ENCODE measurements at regions of chr14 and their contacts with region 1.

Region 1: GRCh38 chr14:68649476-68650189 is 143.2 kb downstream of the ZFP36L1 start:
- DNase-seq: peak in 1 of 3 donors; percentile 13
- H3K4me3 ChIP-seq: no peak overlapping the region
- H3K4me3 Mint-ChIP-seq: no peak overlapping the region
- H3K27ac ChIP-seq: no peak overlapping the region
- H3K27ac Mint-ChIP-seq: no peak overlapping the region
- H3K4me1 ChIP-seq: peaks cover 23 to 24% of the 10 kb centered on the region in 2 donors
- H3K4me1 Mint-ChIP-seq: peaks cover 30% of the 10 kb centered on the region
- H3K27me3 ChIP-seq: no peaks in the 10 kb centered on the region
- H3K27me3 Mint-ChIP-seq: peaks cover under 1 to 2% (median 2%) of the 10 kb centered on the region in 3 donors
- CTCF ChIP-seq: no peak

Region 2: GRCh38 chr14:68328509-68328908 is 321.1 kb before region 1 on chr14:
- intact Hi-C with region 1: no loop called
- DNase-seq: no peak
- H3K4me3 ChIP-seq: no peak overlapping the region
- H3K4me3 Mint-ChIP-seq: no peak overlapping the region
- H3K27ac ChIP-seq: no peak overlapping the region
- H3K27ac Mint-ChIP-seq: no peak overlapping the region
- H3K4me1 ChIP-seq: peaks cover 30 to 33% of the 10 kb centered on the region in 2 donors
- H3K4me1 Mint-ChIP-seq: peaks cover 36% of the 10 kb centered on the region
- H3K27me3 ChIP-seq: no peaks in the 10 kb centered on the region
- H3K27me3 Mint-ChIP-seq: no peaks in the 10 kb centered on the region
- CTCF ChIP-seq: no peak

Region 3: DNA sequence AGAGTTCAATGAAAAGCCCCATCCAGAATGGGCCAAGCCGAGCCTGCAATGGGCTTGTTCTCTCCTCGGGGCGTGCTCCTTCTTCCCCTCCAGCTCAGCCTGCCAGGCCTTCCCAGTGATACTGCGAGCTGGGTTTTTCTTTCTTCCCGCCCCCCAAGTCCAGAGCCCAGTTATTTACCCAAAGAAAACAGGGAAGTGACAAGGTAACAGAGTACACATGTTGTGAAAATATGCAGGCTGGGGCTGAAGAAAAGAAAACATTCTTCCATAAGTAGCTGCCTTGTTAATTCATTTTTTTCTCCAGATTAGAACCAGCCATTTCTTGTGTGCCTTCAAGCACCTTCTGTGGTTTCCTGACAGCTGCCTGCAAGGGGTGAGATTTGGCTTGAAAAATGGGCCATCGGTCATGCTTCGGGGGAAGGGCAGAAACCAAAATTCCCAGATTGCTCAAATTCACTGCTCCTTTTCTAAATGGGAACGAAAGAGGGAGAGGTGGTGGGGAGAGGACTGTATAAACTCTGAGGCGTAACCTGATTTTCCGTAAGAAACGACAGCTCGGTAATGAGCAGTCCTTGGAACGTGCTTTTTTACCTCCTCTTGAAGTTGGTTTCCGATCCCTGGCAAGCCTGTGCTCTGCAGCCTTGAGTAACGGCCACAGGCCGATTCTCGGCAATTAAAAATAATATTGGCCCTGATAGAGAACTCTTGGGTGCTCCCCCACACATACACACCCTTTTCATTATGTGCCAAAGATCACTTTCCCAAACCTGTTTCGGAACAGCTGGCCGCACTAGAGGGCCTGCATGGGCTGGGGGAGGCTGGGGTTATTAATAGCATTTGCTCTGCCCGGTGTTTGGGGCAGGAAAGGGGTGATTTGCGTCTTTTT is 86.1 kb before region 1 on chr14:
- intact Hi-C with region 1: no loop called
- DNase-seq: peak in 1 of 3 donors; percentile 52
- H3K4me3 ChIP-seq: no peak overlapping the region
- H3K4me3 Mint-ChIP-seq: peak overlapping the region in 1 of 2 donors; percentile 14
- H3K27ac ChIP-seq: no peak overlapping the region
- H3K27ac Mint-ChIP-seq: peak overlapping the region in 1 of 7 donors; percentile 50
- H3K4me1 ChIP-seq: peaks cover 23 to 27% of the 10 kb centered on the region in 2 donors
- H3K4me1 Mint-ChIP-seq: peaks cover 25% of the 10 kb centered on the region
- H3K27me3 ChIP-seq: peaks cover 0 to 3% of the 10 kb centered on the region in 2 donors
- H3K27me3 Mint-ChIP-seq: peaks cover 2 to 9% (median 4%) of the 10 kb centered on the region in 3 donors
- CTCF ChIP-seq: no peak

Region 4: GRCh38 chr14:68607081-68607886 is 42.3 kb before region 1 on chr14:
- intact Hi-C with region 1: loop called in 1 of 2 experiments (anchors 5 kb)
- DNase-seq: no peak
- H3K4me3 ChIP-seq: peak overlapping the region in 1 of 3 experiments; percentile 38
- H3K4me3 Mint-ChIP-seq: peak overlapping the region in 1 of 2 donors; percentile 65
- H3K27ac ChIP-seq: peak overlapping the region; percentile 80 to 90
- H3K27ac Mint-ChIP-seq: peak overlapping the region in 3 of 7 donors; percentile 87 to 95 (median 92)
- H3K4me1 ChIP-seq: peaks cover 45 to 62% of the 10 kb centered on the region in 2 donors
- H3K4me1 Mint-ChIP-seq: peaks cover 10% of the 10 kb centered on the region
- H3K27me3 ChIP-seq: no peaks in the 10 kb centered on the region
- H3K27me3 Mint-ChIP-seq: peaks cover 2 to 7% (median 2%) of the 10 kb centered on the region in 3 donors
- CTCF ChIP-seq: no peak

Region 5: DNA sequence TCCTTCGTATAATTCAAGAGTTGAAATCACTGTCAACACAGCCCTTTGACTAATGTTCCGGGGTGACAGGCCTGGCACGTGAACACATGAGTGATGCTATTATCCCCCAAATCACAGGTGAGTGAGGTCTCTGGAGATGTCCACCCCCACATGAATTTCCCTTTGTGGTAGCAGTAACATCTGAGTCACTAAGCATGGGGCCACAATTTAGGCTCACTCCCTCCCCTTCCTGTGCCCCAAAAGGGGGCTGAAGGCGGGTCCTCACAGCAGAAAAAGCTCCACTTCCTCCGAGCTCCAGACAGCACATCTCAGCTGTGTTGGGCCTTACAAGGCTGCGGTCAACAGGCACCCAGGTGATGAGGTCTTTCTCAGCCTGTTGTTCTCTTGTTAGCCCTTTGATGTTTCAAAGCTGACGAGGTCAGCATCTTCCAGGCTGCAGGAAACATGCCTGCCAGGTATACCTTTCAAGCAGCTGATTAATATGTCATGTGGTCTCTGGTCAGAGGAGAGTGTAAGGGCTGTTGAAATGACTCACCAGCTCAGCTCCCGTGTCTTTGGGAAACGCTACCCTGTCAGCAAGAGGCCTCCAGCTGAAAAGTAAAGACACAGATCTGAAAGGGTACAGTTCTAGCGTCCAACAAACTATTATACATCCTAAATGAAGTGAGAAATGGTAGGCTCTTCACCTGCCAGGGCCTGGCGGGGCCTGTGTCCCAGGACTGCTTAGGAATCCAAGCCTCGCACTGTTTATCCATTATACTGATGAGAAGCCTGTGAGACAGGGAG is 36.0 kb after region 1 on chr14:
- intact Hi-C with region 1: no loop called
- DNase-seq: peak; percentile 83 to 89 (median 88)
- H3K4me3 ChIP-seq: no peak overlapping the region
- H3K4me3 Mint-ChIP-seq: peak overlapping the region; percentile 24 to 46
- H3K27ac ChIP-seq: peak overlapping the region; percentile 99 to 100
- H3K27ac Mint-ChIP-seq: peak overlapping the region; percentile 100
- H3K4me1 ChIP-seq: peaks cover 72 to 79% of the 10 kb centered on the region in 2 donors
- H3K4me1 Mint-ChIP-seq: peaks cover 75% of the 10 kb centered on the region
- H3K27me3 ChIP-seq: no peaks in the 10 kb centered on the region
- H3K27me3 Mint-ChIP-seq: peaks cover 0 to 4% (median 1%) of the 10 kb centered on the region in 3 donors
- CTCF ChIP-seq: no peak

Region 6: DNA sequence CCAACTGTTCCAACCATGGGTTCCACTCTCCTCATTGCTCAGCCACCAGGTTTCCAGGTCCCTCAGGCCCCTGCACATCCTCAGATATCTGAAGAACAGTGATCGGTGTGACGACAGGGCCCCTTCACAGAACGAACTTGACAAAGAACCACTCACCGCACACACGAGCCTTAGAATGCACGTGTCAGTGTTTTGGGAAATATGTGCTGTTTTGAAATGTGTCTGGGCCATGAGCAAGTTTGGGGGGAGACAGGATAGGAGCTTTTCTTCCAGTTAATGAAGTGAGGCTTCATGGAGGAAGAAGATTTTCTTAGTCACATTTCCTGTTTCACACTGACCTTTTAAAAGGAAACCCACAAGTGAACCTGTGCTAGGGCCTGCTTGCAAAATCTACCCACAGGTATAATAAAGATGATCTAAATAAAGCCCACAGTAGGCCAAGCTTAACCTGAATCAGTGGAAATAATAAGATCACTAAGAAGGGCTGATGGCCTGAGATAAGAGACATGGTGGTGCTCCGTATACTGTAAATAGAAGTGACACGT is 84.7 kb after region 1 on chr14:
- intact Hi-C with region 1: no loop called
- DNase-seq: peak; percentile 92 to 96 (median 95)
- H3K4me3 ChIP-seq: peak overlapping the region in 1 of 3 experiments; percentile 15
- H3K4me3 Mint-ChIP-seq: peak overlapping the region; percentile 34 to 64
- H3K27ac ChIP-seq: peak overlapping the region; percentile 97 to 99
- H3K27ac Mint-ChIP-seq: peak overlapping the region; percentile 98 to 100 (median 99)
- H3K4me1 ChIP-seq: peaks cover 45 to 50% of the 10 kb centered on the region in 2 donors
- H3K4me1 Mint-ChIP-seq: peaks cover 64% of the 10 kb centered on the region
- H3K27me3 ChIP-seq: peaks cover 20 to 39% of the 10 kb centered on the region in 2 donors
- H3K27me3 Mint-ChIP-seq: peaks cover 46 to 61% (median 46%) of the 10 kb centered on the region in 3 donors
- CTCF ChIP-seq: no peak